Activated T-helper 1 cell treated with anti-CD3 and anti-CD28 coated beads, Interleukin-12 subunit alpha, Interleukin-12 subunit beta, Interleukin-2, Interleukin-4 antibody, amounts not matched to agents 30 ng/mL and 10 ng/mL and 1 ng/mL, durations not matched to agents 14 hours and 24 hours and 36 hours (primary cell): ENCODE measurements at regions of chr5 and their contacts with region 1.

Region 1: DNA sequence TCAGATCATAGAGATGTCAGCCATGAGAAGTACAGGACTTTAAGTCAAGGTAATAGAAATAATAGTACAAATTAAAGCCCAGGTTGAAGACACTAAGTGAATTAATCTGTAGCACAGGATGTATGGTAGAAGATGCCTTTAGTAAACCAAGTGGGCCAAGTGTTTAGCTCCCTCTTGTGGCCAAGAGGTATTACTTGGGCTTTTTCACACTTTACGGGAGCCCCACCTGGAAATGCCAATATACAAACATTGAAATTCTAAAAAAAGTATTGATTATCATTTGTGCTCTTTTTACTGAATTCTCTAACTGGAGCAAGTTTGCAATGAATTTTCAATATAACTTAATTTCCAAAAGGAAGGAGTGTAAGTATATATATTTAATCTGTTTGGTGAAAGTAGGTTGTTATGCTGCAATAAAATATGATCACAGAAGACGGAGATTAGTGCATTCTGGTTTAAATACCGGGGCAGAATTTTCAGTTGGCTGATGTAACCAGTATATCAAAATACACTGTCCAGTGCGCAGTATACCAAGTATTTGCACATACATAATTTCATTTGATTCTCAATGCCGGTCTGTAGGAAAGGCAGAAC is 84.7 kb downstream of the PARP8 start:
- DNase-seq: no peak
- H3K4me3 Mint-ChIP-seq: no peak overlapping the region
- H3K27ac Mint-ChIP-seq: no peak overlapping the region
- H3K4me1 Mint-ChIP-seq: peaks cover 41% of the 10 kb centered on the region
- H3K27me3 Mint-ChIP-seq: no peaks in the 10 kb centered on the region

Region 2: DNA sequence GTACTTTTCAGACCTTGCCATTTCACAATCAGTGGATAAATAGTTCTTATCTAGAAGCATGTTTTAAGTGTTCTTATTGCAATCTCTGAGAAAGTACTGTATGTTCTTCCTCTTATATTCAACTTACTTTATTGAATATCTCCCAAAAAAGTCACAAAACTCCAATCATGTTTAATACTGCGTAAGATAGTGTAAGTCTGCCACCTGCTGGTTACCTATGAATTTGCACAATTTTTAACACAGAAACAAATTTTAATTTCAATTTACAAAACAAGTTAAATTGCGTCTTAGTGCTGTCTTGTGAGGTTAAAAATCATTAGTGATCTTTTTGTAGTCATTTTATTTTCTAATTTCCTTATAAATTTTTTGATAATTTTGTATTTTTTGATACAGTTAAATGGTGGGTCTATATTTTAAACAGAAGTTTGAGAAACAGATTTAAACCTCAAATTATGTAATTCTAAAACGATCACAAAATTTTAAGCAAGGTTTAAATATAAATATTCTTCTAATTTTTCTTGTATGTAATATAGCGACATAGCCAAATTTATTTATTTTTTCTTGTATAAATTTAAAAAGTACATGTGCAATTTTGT is 425.8 kb before region 1 on chr5:
- intact Hi-C with region 1: loop called (anchors 5 kb)
- DNase-seq: no peak
- H3K4me3 Mint-ChIP-seq: no peak overlapping the region
- H3K27ac Mint-ChIP-seq: no peak overlapping the region
- H3K4me1 Mint-ChIP-seq: peaks cover 21% of the 10 kb centered on the region
- H3K27me3 Mint-ChIP-seq: peaks cover 3% of the 10 kb centered on the region

Region 3: GRCh38 chr5:50697421-50698138 is 53.6 kb before region 1 on chr5:
- intact Hi-C with region 1: no loop called
- DNase-seq: no peak
- H3K4me3 Mint-ChIP-seq: no peak overlapping the region
- H3K27ac Mint-ChIP-seq: no peak overlapping the region
- H3K4me1 Mint-ChIP-seq: peaks cover 59% of the 10 kb centered on the region
- H3K27me3 Mint-ChIP-seq: no peaks in the 10 kb centered on the region